ENCODE measurements at regions of chr4 and their contacts with region 1.

Region 1: GRCh38 chr4:85147439-85148076 is 181.1 kb upstream of the WDFY3 start:
- DNase-seq: peak; percentile 82
- ATAC-seq: peak; percentile 83
- H3K4me3 ChIP-seq: no peak overlapping the region
- H3K4me3 Mint-ChIP-seq: no peak overlapping the region
- H3K27ac ChIP-seq: no peak overlapping the region
- H3K27ac Mint-ChIP-seq: no peak overlapping the region
- H3K4me1 ChIP-seq: peaks cover 0 to 2% of the 10 kb centered on the region in 2 donors
- H3K4me1 Mint-ChIP-seq: peaks cover 6% of the 10 kb centered on the region
- H3K27me3 ChIP-seq: no peaks in the 10 kb centered on the region
- H3K27me3 Mint-ChIP-seq: no peaks in the 10 kb centered on the region
- CTCF ChIP-seq: peak; percentile 90

Region 2: DNA sequence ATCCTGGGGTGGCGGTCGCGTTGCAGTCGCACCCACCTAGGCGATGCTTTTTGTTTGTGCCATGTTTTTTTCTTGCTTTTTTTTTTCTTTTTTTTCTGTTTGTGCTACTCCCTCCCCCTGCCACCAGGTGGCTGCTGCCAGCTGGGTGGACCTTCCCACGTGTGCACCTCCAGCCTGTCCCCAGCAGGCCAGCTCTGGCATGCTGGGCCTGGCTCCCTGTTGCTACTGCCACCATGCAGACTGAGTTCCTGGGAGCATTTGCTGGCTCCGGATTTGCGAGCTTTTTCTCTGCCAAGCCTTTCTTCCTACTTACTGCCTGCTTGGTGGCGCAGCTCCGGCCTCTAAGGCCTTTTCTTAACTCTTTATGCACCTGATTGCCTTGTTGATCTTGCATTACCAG is 19.9 kb before region 1 on chr4:
- CTCF ChIA-PET with region 1: interaction called, 12 read pairs
- POLR2A ChIA-PET with region 1: no interaction called
- intact Hi-C with region 1: no loop called
- DNase-seq: peak; percentile 50
- ATAC-seq: peak; percentile 58
- H3K4me3 ChIP-seq: no peak overlapping the region
- H3K4me3 Mint-ChIP-seq: no peak overlapping the region
- H3K27ac ChIP-seq: no peak overlapping the region
- H3K27ac Mint-ChIP-seq: no peak overlapping the region
- H3K4me1 ChIP-seq: no peaks in the 10 kb centered on the region
- H3K4me1 Mint-ChIP-seq: peaks cover 2% of the 10 kb centered on the region
- H3K27me3 ChIP-seq: no peaks in the 10 kb centered on the region
- H3K27me3 Mint-ChIP-seq: peaks cover 7% of the 10 kb centered on the region
- CTCF ChIP-seq: peak; percentile 70

Region 3: GRCh38 chr4:85175190-85175589 is 27.6 kb after region 1 on chr4:
- CTCF ChIA-PET with region 1: no interaction called
- POLR2A ChIA-PET with region 1: no interaction called
- intact Hi-C with region 1: no loop called
- DNase-seq: no peak
- ATAC-seq: no peak
- H3K4me3 ChIP-seq: no peak overlapping the region
- H3K4me3 Mint-ChIP-seq: no peak overlapping the region
- H3K27ac ChIP-seq: no peak overlapping the region
- H3K27ac Mint-ChIP-seq: no peak overlapping the region
- H3K4me1 ChIP-seq: no peaks in the 10 kb centered on the region
- H3K4me1 Mint-ChIP-seq: no peaks in the 10 kb centered on the region
- H3K27me3 ChIP-seq: peaks cover 0 to 2% (median 0%) of the 10 kb centered on the region in 4 experiments
- H3K27me3 Mint-ChIP-seq: no peaks in the 10 kb centered on the region
- CTCF ChIP-seq: no peak

Region 4: GRCh38 chr4:85370430-85371032 is 223.0 kb after region 1 on chr4:
- CTCF ChIA-PET with region 1: interaction called, 19 read pairs
- POLR2A ChIA-PET with region 1: no interaction called
- intact Hi-C with region 1: loop called (anchors 1 kb)
- DNase-seq: peak; percentile 75
- ATAC-seq: peak; percentile 82
- H3K4me3 ChIP-seq: no peak overlapping the region
- H3K4me3 Mint-ChIP-seq: peak overlapping the region; percentile 52
- H3K27ac ChIP-seq: peak overlapping the region; percentile 31 to 39
- H3K27ac Mint-ChIP-seq: peak overlapping the region; percentile 77
- H3K4me1 ChIP-seq: peaks cover 24 to 26% of the 10 kb centered on the region in 2 donors
- H3K4me1 Mint-ChIP-seq: peaks cover 28% of the 10 kb centered on the region
- H3K27me3 ChIP-seq: no peaks in the 10 kb centered on the region
- H3K27me3 Mint-ChIP-seq: no peaks in the 10 kb centered on the region
- CTCF ChIP-seq: peak; percentile 78

Region 5: GRCh38 chr4:85968945-85969819 is 821.6 kb after region 1 on chr4:
- CTCF ChIA-PET with region 1: interaction called, 57 read pairs
- POLR2A ChIA-PET with region 1: no interaction called
- intact Hi-C with region 1: loop called (anchors 1 kb)
- DNase-seq: peak; percentile 66
- ATAC-seq: peak; percentile 28
- H3K4me3 ChIP-seq: no peak overlapping the region
- H3K4me3 Mint-ChIP-seq: no peak overlapping the region
- H3K27ac ChIP-seq: no peak overlapping the region
- H3K27ac Mint-ChIP-seq: no peak overlapping the region
- H3K4me1 ChIP-seq: peaks cover 0 to 6% of the 10 kb centered on the region in 2 donors
- H3K4me1 Mint-ChIP-seq: peaks cover 15% of the 10 kb centered on the region
- H3K27me3 ChIP-seq: no peaks in the 10 kb centered on the region
- H3K27me3 Mint-ChIP-seq: no peaks in the 10 kb centered on the region
- CTCF ChIP-seq: peak; percentile 75